T-cell (primary cell): ENCODE measurements at regions of chr19 and their contacts with region 1.

Region 1: DNA sequence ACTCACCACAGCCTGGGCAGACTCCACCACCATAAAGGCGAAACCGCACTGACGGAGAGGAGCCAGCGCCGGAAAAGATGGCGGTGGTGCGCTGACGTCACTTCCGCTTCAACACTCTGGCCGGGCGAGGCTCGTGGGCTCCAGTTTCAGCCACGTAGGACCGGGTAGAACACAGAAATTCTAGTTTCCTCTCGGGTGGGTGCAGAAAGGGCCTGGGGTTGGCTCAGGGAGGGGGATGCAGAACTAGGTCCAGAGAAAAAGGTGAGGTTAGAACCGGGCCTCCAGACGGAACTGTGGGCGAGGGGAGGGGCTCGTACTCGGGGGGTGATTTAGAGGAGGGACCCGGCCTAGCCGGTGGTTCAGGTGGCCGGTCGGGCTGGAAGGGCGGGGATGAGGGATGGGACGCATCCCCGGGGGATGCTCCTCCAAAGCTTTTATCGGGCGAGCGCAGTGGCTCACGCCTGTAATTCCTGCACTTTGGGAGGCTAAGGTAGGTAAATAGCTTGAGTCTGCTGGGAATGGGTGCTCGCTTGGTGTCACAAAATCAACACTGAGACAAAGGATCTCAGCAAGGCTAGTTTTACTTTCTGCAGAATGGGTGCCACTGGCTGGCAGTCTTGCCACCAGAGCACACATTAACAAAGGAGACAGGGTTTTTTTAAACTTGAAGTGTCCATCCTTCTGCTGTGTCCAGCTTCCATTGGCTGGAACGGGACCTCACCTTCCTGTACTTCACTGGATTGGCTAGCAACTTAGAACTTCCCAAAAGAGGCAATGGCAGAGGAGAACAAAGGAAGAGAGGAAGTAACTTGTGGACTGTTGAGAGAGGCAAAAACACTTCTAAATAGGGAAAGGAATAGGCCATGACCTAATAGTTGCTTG is at the start of gene ZNF561:
- DNase-seq: peak; percentile 77 to 96 (median 86)
- ATAC-seq: peak; percentile 90 to 95 (median 94)
- H3K4me3 ChIP-seq: peak within 1 kb of the TSS; percentile 88 to 92
- H3K4me3 Mint-ChIP-seq: peak within 1 kb of the TSS; percentile 97 to 100 (median 97)
- H3K27ac ChIP-seq: peak within 1 kb of the TSS; percentile 94
- H3K27ac Mint-ChIP-seq: peak within 1 kb of the TSS; percentile 99 to 100
- H3K4me1 ChIP-seq: peaks cover 16 to 19% of the 10 kb centered on the region in 2 experiments
- H3K4me1 Mint-ChIP-seq: peaks cover 24 to 32% (median 29%) of the 10 kb centered on the region in 3 donors
- H3K27me3 ChIP-seq: no peaks in the 10 kb centered on the region
- H3K27me3 Mint-ChIP-seq: peaks cover 0 to 3% of the 10 kb centered on the region in 2 donors
- total RNA-seq, gene ZNF561: 36.7 to 47.2 (median 41.2) TPM

Region 2: GRCh38 chr19:9523885-9524474 is 97.4 kb before region 1 on chr19:
- CTCF ChIA-PET with region 1: interaction called in 1 of 2 experiments, 11 read pairs
- POLR2A ChIA-PET with region 1: no interaction called
- DNase-seq: no peak
- ATAC-seq: no peak
- H3K4me3 ChIP-seq: no peak overlapping the region
- H3K4me3 Mint-ChIP-seq: no peak overlapping the region
- H3K27ac ChIP-seq: no peak overlapping the region
- H3K27ac Mint-ChIP-seq: no peak overlapping the region
- H3K4me1 ChIP-seq: no peaks in the 10 kb centered on the region
- H3K4me1 Mint-ChIP-seq: no peaks in the 10 kb centered on the region
- H3K27me3 ChIP-seq: peaks cover 0 to 3% of the 10 kb centered on the region in 2 experiments
- H3K27me3 Mint-ChIP-seq: no peaks in the 10 kb centered on the region

Region 3: DNA sequence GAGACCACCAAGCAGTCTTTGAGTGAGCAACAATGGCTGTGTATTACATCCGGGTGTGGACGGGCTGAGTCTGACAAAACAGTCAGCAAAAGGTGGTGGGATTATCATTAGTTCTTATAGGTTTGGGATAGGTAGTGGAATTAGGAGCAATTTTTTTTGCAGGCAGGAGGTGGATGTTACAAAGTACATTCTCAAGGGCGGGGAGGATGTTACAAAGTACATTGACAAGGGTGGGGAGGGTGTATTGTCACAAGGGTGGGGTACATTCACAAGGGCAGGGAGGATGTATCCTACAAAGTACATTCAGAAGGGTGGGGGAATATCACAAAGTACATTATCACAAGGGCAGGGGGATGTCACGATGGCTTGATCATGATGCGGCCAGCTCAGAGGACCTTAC is 14.6 kb after region 1 on chr19:
- CTCF ChIA-PET with region 1: interaction called in 1 of 2 experiments, 16 read pairs
- POLR2A ChIA-PET with region 1: no interaction called
- DNase-seq: no peak
- ATAC-seq: no peak
- H3K4me3 ChIP-seq: no peak overlapping the region
- H3K4me3 Mint-ChIP-seq: no peak overlapping the region
- H3K27ac ChIP-seq: no peak overlapping the region
- H3K27ac Mint-ChIP-seq: no peak overlapping the region
- H3K4me1 ChIP-seq: no peaks in the 10 kb centered on the region
- H3K4me1 Mint-ChIP-seq: no peaks in the 10 kb centered on the region
- H3K27me3 ChIP-seq: no peaks in the 10 kb centered on the region
- H3K27me3 Mint-ChIP-seq: no peaks in the 10 kb centered on the region

Region 4: GRCh38 chr19:9721861-9722260 is 100.5 kb after region 1 on chr19:
- CTCF ChIA-PET with region 1: no interaction called
- POLR2A ChIA-PET with region 1: no interaction called
- DNase-seq: peak in 2 of 35 experiments; percentile 2 to 6
- ATAC-seq: peak in 1 of 4 experiments; percentile 36
- H3K4me3 ChIP-seq: no peak overlapping the region
- H3K4me3 Mint-ChIP-seq: no peak overlapping the region
- H3K27ac ChIP-seq: no peak overlapping the region
- H3K27ac Mint-ChIP-seq: no peak overlapping the region
- H3K4me1 ChIP-seq: no peaks in the 10 kb centered on the region
- H3K4me1 Mint-ChIP-seq: peaks cover 8 to 11% (median 9%) of the 10 kb centered on the region in 3 donors
- H3K27me3 ChIP-seq: no peaks in the 10 kb centered on the region
- H3K27me3 Mint-ChIP-seq: peaks cover 6 to 11% of the 10 kb centered on the region in 2 donors

Region 5: GRCh38 chr19:9796113-9796773 is 174.8 kb after region 1 on chr19:
- CTCF ChIA-PET with region 1: interaction called, 3 to 12 read pairs
- POLR2A ChIA-PET with region 1: interaction called, 3 to 4 read pairs
- DNase-seq: peak; percentile 65 to 94 (median 84)
- ATAC-seq: peak; percentile 26 to 46 (median 40)
- H3K4me3 ChIP-seq: no peak overlapping the region
- H3K4me3 Mint-ChIP-seq: peak overlapping the region in 1 of 3 donors; percentile 26
- H3K27ac ChIP-seq: peak overlapping the region; percentile 86
- H3K27ac Mint-ChIP-seq: peak overlapping the region; percentile 81 to 89
- H3K4me1 ChIP-seq: peaks cover 6 to 30% of the 10 kb centered on the region in 2 experiments
- H3K4me1 Mint-ChIP-seq: peaks cover 25 to 38% (median 26%) of the 10 kb centered on the region in 3 donors
- H3K27me3 ChIP-seq: no peaks in the 10 kb centered on the region
- H3K27me3 Mint-ChIP-seq: no peaks in the 10 kb centered on the region